Activated T-helper 2 cell treated with anti-CD3 and anti-CD28 coated beads, Interferon-gamma antibody, Interleukin-2, Interleukin-4, amounts not matched to agents 10 μg/mL and 5 μg/mL and 100 μg/mL, durations not matched to agents 14 hours and 24 hours and 36 hours (primary cell): ENCODE measurements at regions of chr10 and their contacts with region 1.

Region 1: DNA sequence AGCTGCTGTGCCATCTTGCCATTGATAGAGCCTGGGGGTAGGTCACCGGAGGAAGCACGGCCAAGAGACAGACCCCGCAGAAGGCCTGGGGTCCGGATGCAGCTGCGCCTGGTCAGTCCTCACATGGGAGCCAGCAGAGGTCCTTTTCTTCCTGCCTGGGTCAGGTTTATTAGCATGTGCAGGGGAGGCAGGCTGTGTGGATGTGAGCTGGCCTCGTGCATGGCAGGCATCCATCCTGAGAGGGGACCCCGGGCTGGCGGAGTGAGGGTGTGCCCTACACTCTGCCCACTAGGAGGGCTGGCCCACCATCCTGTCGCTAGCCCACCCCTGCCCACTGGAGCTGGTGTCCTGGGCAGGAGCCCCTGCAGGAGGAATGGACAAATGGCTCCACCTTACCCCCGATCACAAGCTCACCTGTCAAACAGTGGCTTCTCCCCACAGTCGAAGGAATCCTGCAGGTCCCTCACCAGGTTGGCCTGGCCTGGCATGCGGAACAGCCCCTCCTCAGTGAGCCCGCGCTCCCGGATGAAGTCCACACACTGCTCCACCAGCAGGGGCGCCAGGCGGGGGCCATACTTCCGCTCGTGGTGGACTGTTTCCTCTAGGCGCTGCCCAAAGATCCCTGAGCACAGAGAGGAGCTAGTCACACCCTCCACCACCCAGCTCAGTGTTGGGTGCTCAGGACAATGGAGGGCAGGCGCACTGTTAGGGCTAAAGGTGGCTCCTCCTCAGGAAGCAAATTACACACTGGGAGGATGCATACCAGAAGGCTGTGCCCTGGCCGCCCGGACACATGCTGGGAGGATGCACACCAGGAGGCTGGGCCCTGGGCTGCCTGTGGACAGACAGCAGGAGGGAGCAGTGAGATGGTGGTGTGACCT is 145.4 kb downstream of the ARHGAP22 start:
- DNase-seq: no peak
- H3K4me3 Mint-ChIP-seq: no peak overlapping the region
- H3K27ac Mint-ChIP-seq: no peak overlapping the region
- H3K4me1 Mint-ChIP-seq: no peaks in the 10 kb centered on the region
- H3K27me3 Mint-ChIP-seq: no peaks in the 10 kb centered on the region

Region 2: GRCh38 chr10:48442090-48442808 is 17.3 kb before region 1 on chr10:
- intact Hi-C with region 1: loop called (anchors 2 kb)
- DNase-seq: no peak
- H3K4me3 Mint-ChIP-seq: no peak overlapping the region
- H3K27ac Mint-ChIP-seq: no peak overlapping the region
- H3K4me1 Mint-ChIP-seq: no peaks in the 10 kb centered on the region
- H3K27me3 Mint-ChIP-seq: no peaks in the 10 kb centered on the region